ENCODE measurements at regions of chr7 and their contacts with region 1.

Region 1: DNA sequence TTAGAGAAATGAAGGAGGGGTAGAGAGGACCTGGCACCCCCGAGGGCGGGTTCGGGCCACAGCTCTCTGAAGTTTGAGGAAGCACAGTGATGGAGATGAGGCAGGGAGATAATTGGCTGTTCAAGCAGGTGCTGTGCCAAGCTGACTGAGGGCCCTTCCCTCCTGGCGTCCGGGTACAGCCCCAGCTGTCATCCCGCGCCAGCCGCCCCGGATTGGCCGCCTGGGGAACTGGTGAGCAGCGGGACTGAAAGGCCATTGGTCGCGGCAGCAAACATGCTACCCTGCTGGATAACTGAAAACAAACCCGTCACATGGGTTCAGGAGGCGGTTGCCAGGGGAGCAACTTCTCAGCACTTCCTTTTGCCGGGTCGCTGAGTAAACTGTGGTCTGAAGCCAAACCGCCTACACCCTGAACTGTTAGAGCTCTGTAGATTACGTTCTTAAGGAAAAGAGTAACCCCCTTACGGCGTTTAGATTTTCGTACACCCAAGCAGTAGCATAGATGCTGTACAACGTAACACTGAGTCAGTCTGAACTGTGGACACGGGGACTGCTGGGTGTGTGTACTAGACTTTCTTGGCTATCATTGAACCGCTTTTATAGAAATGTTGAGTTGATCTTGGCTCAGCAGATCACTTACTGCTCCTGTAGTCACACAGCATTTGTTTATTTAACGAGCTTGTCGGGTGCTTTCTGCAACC is 1.3 kb downstream of the INSIG1 start:
- DNase-seq: peak; percentile 98
- H3K4me3 Mint-ChIP-seq: peak overlapping the region; percentile 95
- H3K27ac Mint-ChIP-seq: peak overlapping the region; percentile 98
- H3K4me1 Mint-ChIP-seq: peaks cover 65% of the 10 kb centered on the region
- H3K27me3 Mint-ChIP-seq: no peaks in the 10 kb centered on the region

Region 2: GRCh38 chr7:154879629-154880028 is 419.4 kb before region 1 on chr7:
- CTCF ChIA-PET with region 1: no interaction called
- DNase-seq: no peak
- H3K4me3 Mint-ChIP-seq: no peak overlapping the region
- H3K27ac Mint-ChIP-seq: no peak overlapping the region
- H3K4me1 Mint-ChIP-seq: no peaks in the 10 kb centered on the region
- H3K27me3 Mint-ChIP-seq: no peaks in the 10 kb centered on the region

Region 3: DNA sequence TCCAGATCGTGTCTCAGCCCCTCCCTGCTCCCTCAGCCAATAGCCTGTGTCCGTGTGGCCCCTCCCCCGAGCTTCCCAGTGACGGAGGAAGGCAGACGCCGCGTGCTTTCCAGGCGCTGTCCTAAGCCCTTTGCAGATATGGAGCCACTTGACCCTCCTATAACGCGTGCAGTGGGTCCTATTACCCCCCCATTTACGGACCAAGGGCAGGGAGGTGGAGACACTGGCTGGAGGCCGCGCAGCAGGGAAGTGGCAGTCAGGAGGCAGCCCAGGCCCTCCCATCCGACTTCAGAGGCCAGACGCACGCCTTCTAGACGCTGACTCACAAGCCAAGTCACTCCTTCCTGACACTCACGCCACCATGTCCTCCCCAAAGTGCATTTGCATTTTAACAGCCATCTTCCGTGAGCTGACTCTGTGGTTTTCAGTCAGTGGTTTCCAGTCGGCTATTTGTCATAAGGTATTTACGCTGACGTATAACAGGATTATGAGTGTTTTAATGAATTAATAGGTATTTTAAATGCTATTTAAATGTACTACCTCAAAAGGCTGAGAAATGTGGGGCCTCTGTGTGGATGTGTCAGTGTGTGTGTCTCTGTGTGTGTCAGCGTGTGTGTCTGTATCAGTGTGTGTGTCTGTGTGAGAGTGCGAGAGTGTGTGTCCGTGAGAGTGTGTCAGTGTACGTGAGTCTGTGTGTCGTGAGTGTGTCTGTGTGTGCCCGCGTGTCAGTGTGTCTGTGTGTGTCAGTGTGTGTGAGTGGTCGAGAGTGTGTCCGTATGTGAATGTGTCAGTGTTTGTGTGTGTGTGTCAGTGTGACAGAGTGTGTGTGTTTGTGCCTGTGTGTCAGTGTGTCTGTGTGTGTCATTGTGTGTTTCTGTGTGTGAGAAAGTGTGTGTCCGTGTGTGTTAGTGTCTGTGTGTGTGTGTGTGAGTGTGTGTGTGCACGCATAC is 93.3 kb before region 1 on chr7:
- CTCF ChIA-PET with region 1: interaction called, 13 read pairs
- DNase-seq: peak; percentile 92
- H3K4me3 Mint-ChIP-seq: peak overlapping the region; percentile 71
- H3K27ac Mint-ChIP-seq: peak overlapping the region; percentile 94
- H3K4me1 Mint-ChIP-seq: peaks cover 21% of the 10 kb centered on the region
- H3K27me3 Mint-ChIP-seq: peaks cover 12% of the 10 kb centered on the region